ENCODE measurements at regions of chr1 and their contacts with region 1.

Region 1: DNA sequence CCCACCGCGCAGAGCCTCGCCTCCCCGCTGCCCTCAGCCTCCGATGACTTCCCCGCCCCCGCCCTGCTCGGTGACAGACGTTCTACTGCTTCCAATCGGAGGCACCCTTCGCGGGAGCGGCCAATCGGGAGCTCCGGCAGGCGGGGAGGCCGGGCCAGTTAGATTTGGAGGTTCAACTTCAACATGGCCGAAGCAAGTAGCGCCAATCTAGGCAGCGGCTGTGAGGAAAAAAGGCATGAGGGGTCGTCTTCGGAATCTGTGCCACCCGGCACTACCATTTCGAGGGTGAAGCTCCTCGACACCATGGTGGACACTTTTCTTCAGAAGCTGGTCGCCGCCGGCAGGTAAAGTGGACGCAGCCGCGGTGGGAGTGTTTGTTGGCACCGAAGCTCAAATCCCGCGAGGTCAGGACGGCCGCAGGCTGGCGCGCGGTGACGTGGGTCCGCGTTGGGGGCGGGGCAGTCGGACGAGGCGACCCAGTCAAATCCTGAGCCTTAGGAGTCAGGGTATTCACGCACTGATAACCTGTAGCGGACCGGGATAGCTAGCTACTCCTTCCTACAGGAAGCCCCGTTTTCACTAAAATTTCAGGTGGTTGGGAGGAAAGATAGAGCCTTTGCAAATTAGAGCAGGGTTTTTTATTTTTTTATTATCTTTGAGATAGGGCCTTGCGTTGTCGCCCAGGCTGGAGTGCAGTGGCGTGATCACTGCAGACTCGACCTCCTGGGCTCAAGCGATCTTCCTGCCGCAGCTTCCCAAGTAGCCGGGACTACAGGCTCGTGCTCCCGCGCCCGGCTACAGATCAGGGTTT is at the start of gene PMF1:
- DNase-seq: peak; percentile 99
- H3K4me3 Mint-ChIP-seq: peak within 1 kb of the TSS; percentile 79
- H3K27ac Mint-ChIP-seq: peak within 1 kb of the TSS; percentile 97
- H3K4me1 Mint-ChIP-seq: peaks cover 46% of the 10 kb centered on the region
- H3K27me3 Mint-ChIP-seq: no peaks in the 10 kb centered on the region
- total RNA-seq, gene PMF1: 135 TPM

Region 2: GRCh38 chr1:155978325-155978972 is 234.6 kb before region 1 on chr1 and contains the start of gene ARHGEF2:
- CTCF ChIA-PET with region 1: no interaction called
- intact Hi-C with region 1: loop called (anchors 5 kb)
- DNase-seq: peak; percentile 87
- H3K4me3 Mint-ChIP-seq: peak within 1 kb of the TSS; percentile 98
- H3K27ac Mint-ChIP-seq: peak within 1 kb of the TSS; percentile 99
- H3K4me1 Mint-ChIP-seq: peaks cover 64% of the 10 kb centered on the region
- H3K27me3 Mint-ChIP-seq: no peaks in the 10 kb centered on the region
- total RNA-seq, gene ARHGEF2: 154 to 159 TPM

Region 3: DNA sequence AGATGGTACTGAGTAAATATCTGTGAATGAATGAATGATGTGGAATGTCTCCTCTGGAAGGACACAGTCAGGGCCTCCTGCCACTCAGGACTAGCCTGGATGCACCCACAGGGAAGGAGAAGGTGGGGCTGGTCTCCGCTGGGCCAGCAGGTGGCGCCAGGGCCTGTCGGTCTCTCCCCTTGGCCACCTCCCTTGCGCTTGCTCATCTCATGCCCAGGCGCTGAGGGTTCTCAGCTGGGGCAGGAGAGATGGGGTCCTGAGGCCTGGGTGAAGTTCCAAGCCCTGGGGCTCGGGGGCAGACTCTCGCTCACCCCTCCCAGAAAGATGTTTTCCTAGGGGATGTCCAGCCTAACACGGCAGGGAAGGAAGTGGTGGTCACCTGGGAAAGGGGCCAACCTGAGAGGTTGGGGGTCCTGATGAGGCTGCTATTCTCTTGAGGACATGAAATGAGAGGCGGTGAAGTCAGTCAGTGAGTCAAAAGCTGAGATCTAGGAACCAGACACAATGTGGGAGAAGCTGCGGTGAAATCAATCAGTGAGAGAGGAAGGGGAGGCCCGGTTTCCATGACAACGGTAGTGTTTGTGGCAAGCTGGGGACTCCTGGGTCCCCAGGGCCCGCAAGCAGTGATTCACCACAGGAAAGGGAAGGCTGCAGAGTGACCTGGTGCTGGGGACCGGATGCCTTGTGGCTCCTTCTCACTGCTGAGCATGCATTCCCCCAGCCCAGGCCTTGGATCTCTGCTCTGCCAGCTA is 116.2 kb before region 1 on chr1:
- CTCF ChIA-PET with region 1: interaction called, 3 read pairs
- intact Hi-C with region 1: loop called (anchors 1 kb)
- DNase-seq: peak; percentile 98
- H3K4me3 Mint-ChIP-seq: peak overlapping the region; percentile 40
- H3K27ac Mint-ChIP-seq: peak overlapping the region; percentile 99
- H3K4me1 Mint-ChIP-seq: peaks cover 49% of the 10 kb centered on the region
- H3K27me3 Mint-ChIP-seq: peaks cover 11% of the 10 kb centered on the region

Region 4: GRCh38 chr1:156104065-156104810 is 108.8 kb before region 1 on chr1:
- CTCF ChIA-PET with region 1: interaction called, 3 read pairs
- intact Hi-C with region 1: loop called (anchors 1 kb)
- DNase-seq: peak; percentile 48
- H3K4me3 Mint-ChIP-seq: no peak overlapping the region
- H3K27ac Mint-ChIP-seq: peak overlapping the region; percentile 63
- H3K4me1 Mint-ChIP-seq: peaks cover 61% of the 10 kb centered on the region
- H3K27me3 Mint-ChIP-seq: peaks cover 16% of the 10 kb centered on the region

Region 5: DNA sequence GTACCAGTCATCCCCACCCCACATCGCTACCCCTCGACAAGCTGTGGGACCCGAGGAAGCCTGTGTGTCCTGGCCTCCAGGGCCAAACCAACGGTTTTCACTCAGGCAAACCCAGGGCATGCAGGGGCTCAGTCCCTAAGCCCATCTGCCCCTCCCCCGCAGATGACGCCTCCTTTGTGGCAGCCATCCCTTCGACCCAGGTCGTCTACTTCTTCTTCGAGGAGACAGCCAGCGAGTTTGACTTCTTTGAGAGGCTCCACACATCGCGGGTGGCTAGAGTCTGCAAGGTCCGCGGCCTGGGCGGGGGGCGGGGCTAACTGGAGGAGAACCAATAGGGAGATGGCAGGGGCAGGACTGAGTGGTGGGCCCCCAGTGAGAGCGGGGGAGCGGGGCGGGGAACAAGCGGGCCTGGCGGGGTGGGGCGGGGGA is 52.3 kb before region 1 on chr1:
- CTCF ChIA-PET with region 1: no interaction called
- intact Hi-C with region 1: loop called (anchors 1 kb)
- DNase-seq: peak; percentile 73
- H3K4me3 Mint-ChIP-seq: peak overlapping the region; percentile 63
- H3K27ac Mint-ChIP-seq: peak overlapping the region; percentile 83
- H3K4me1 Mint-ChIP-seq: peaks cover 69% of the 10 kb centered on the region
- H3K27me3 Mint-ChIP-seq: no peaks in the 10 kb centered on the region

Region 6: GRCh38 chr1:156193488-156194299 is 19.3 kb before region 1 on chr1 and contains the start of gene SLC25A44:
- CTCF ChIA-PET with region 1: interaction called, 8 read pairs
- intact Hi-C with region 1: loop called (anchors 1 kb)
- DNase-seq: peak; percentile 98
- H3K4me3 Mint-ChIP-seq: peak within 1 kb of the TSS; percentile 79
- H3K27ac Mint-ChIP-seq: peak within 1 kb of the TSS; percentile 74
- H3K4me1 Mint-ChIP-seq: peaks cover 59% of the 10 kb centered on the region
- H3K27me3 Mint-ChIP-seq: no peaks in the 10 kb centered on the region
- total RNA-seq, gene SLC25A44: 69.1 to 73.5 TPM

Region 7: GRCh38 chr1:156198831-156199349 is 14.1 kb before region 1 on chr1:
- CTCF ChIA-PET with region 1: interaction called, 8 read pairs
- intact Hi-C with region 1: loop called (anchors 1 kb)
- DNase-seq: peak; percentile 72
- H3K4me3 Mint-ChIP-seq: no peak overlapping the region
- H3K27ac Mint-ChIP-seq: no peak overlapping the region
- H3K4me1 Mint-ChIP-seq: peaks cover 66% of the 10 kb centered on the region
- H3K27me3 Mint-ChIP-seq: no peaks in the 10 kb centered on the region

Measured in activated naive CD4-positive, alpha-beta T cell treated with anti-CD3 and anti-CD28 coated beads for 36 hours (primary cell).